B cell (primary cell): ENCODE measurements at regions of chr7 and their contacts with region 1.

Region 1: GRCh38 chr7:70693686-70694360 is 438.1 kb upstream of the GALNT17 start:
- DNase-seq: peak; percentile 58
- ATAC-seq: peak; percentile 69
- H3K4me3 ChIP-seq: peak overlapping the region in 4 of 5 experiments; percentile 13 to 71 (median 40)
- H3K4me3 Mint-ChIP-seq: peak overlapping the region; percentile 87
- H3K27ac ChIP-seq: no peak overlapping the region
- H3K27ac Mint-ChIP-seq: peak overlapping the region; percentile 60
- H3K4me1 ChIP-seq: peaks cover 15% of the 10 kb centered on the region in 2 donors
- H3K4me1 Mint-ChIP-seq: peaks cover 16% of the 10 kb centered on the region
- H3K27me3 ChIP-seq: peaks cover 0 to 27% (median 12%) of the 10 kb centered on the region in 4 experiments
- H3K27me3 Mint-ChIP-seq: peaks cover 22% of the 10 kb centered on the region
- CTCF ChIP-seq: no peak

Region 2: GRCh38 chr7:70042533-70042932 is 651.3 kb before region 1 on chr7:
- CTCF ChIA-PET with region 1: interaction called, 10 read pairs
- POLR2A ChIA-PET with region 1: no interaction called
- intact Hi-C with region 1: no loop called
- DNase-seq: no peak
- ATAC-seq: no peak
- H3K4me3 ChIP-seq: no peak overlapping the region
- H3K4me3 Mint-ChIP-seq: no peak overlapping the region
- H3K27ac ChIP-seq: no peak overlapping the region
- H3K27ac Mint-ChIP-seq: no peak overlapping the region
- H3K4me1 ChIP-seq: no peaks in the 10 kb centered on the region
- H3K4me1 Mint-ChIP-seq: peaks cover 5% of the 10 kb centered on the region
- H3K27me3 ChIP-seq: no peaks in the 10 kb centered on the region
- H3K27me3 Mint-ChIP-seq: no peaks in the 10 kb centered on the region
- CTCF ChIP-seq: no peak